WTC11 (cell line): ENCODE measurements at regions of chr11 and their contacts with region 1.

Region 1: GRCh38 chr11:116499396-116500003 is 273.3 kb downstream of the BUD13 start:
- DNase-seq: peak; percentile 98
- ATAC-seq: peak; percentile 84
- H3K4me3 Mint-ChIP-seq: 0 out of 2 replicates have a peak overlapping the region, but pooled peaks have one; percentile 18
- H3K27ac Mint-ChIP-seq: no peak overlapping the region
- H3K4me1 Mint-ChIP-seq: peaks cover 48% of the 10 kb centered on the region
- H3K27me3 Mint-ChIP-seq: peaks cover 27% of the 10 kb centered on the region
- CTCF ChIP-seq: peak; percentile 85

Region 2: DNA sequence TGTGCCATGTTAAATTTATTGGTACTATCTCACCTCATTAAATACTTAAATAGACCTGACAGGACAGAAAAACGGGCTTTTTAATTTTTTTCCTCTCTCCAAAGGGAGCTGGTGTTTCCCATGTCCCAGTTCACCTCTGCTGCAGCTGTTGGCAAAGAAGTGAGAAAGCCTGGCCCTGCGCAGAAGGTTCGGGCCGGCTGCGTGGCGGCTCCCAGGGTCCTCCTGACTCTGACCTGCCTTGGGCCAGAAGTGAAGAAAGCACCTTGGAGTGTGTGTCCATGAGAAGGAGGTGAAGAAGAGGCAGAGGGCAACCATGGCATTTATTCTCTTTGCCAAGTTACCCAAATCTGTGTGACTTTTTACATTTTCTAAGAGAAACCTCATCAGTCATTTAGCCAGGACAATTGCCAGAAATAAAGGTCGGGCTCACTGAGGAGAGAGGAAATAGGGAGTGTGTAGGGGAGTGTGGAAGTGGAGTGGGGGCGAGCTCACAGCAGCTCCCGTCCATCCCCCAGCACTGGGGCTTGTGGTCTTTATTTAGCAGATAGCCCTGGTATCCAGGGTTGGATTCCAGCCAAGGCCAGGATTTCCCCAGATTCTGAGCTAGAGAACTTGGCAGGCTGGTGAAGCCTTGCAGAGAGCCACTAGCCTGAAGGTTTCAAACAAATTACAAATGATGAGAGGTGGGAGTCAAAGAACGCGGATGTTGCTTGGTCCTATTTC is 892.8 kb before region 1 on chr11:
- CTCF ChIA-PET with region 1: no interaction called
- POLR2A ChIA-PET with region 1: no interaction called
- DNase-seq: no peak
- ATAC-seq: no peak
- H3K4me3 Mint-ChIP-seq: no peak overlapping the region
- H3K27ac Mint-ChIP-seq: no peak overlapping the region
- H3K4me1 Mint-ChIP-seq: peaks cover 8% of the 10 kb centered on the region
- H3K27me3 Mint-ChIP-seq: no peaks in the 10 kb centered on the region
- CTCF ChIP-seq: no peak

Region 3: DNA sequence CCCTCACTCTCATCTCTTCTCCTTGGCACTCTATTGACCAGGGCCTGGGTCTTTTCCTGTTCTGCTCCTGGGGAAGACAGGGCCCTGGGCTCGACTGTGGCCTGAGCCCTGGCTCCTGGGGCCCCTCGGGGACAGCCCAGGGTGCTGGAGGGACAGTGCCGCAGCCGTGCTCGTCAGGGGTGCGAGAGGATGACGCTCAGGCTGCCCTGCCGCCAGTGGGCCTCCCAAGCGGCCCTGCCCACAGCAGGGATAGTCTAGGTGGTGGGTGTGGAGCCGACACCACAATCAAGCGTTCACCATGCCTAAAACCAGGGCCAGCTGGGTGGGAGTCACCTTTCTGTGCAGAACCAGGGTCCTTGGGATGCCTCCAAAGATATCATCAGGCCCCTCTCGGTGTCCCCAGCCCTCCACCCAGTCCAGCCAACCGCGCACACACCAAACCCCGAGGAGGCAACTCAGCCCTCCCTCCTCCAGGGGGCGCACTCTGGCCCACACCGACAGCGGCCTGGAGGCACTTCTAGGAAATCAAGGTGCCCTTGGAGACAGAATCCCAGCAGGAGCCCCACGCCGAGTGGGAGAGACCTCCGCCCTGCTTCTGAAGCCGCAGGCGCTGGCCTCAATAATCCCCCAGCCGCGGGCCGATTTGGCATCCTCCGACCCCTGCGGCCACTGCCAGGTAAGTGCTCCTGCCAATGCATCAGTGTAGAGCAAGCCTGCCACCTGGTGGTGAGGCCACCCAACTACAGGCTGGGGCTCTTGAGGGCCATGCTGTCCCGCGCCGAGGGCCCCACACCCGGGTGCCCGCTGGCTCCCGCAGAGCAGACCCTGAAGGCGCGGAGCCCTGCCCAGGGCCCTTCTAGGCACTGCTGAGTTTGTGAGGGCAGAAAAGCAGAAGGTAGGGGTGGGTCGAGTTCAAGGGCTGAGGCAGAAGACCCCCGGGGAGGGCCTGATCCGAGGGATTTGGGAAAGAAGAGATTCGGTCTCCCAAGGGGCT is 223.2 kb before region 1 on chr11:
- CTCF ChIA-PET with region 1: interaction called, 60 read pairs
- POLR2A ChIA-PET with region 1: no interaction called
- DNase-seq: peak; percentile 97
- ATAC-seq: peak; percentile 88
- H3K4me3 Mint-ChIP-seq: peak overlapping the region; percentile 72
- H3K27ac Mint-ChIP-seq: no peak overlapping the region
- H3K4me1 Mint-ChIP-seq: 0 out of 2 replicates have a peak, but pooled peaks cover 2% of the 10 kb centered on the region
- H3K27me3 Mint-ChIP-seq: no peaks in the 10 kb centered on the region
- CTCF ChIP-seq: peak; percentile 99

Region 4: DNA sequence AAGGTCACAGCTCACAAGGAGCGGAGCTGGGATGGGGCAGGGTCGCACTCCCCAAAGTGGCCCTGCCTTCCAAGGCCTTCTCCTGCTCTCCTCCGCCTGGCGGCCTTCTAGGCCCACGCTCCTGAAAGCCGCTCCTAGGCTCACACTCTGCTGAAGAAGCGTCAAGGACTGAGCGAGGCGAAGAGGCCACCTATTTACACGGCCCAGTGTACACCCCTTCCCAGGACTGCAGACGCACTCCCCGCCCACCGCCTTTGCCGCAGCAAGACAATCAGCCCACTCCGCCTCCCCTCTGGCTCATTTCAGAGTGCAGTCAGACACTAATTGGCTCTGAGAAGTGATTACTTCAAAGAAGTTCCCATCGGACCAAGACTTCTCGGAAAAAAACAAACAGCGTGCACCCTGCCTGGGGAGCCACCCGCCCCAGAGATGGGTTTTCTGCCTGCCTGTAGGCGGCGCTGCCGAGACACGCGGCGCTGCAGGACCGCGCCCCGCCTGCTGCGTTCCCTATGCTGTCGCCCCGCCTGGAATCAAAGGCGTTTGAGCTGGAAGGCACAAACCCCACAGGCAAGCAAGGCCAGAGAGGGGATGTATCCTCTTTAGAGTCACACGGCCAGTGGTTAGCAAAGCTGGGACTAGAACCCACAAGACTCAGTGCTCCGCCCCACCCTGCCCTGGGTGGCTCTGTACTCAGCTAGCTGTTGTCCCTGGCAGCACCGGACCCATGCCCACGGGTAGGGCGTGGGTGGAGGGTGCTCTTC is 141.5 kb before region 1 on chr11:
- CTCF ChIA-PET with region 1: interaction called, 59 read pairs
- POLR2A ChIA-PET with region 1: no interaction called
- DNase-seq: peak; percentile 83
- ATAC-seq: peak; percentile 89
- H3K4me3 Mint-ChIP-seq: no peak overlapping the region
- H3K27ac Mint-ChIP-seq: 0 out of 2 replicates have a peak overlapping the region, but pooled peaks have one; percentile 34
- H3K4me1 Mint-ChIP-seq: peaks cover 51% of the 10 kb centered on the region
- H3K27me3 Mint-ChIP-seq: peaks cover 5% of the 10 kb centered on the region; the same call in 1 of the 2 replicates
- CTCF ChIP-seq: peak; percentile 92

Region 5: GRCh38 chr11:116427903-116428637 is 71.4 kb before region 1 on chr11:
- CTCF ChIA-PET with region 1: interaction called, 30 read pairs
- POLR2A ChIA-PET with region 1: no interaction called
- DNase-seq: no peak
- ATAC-seq: no peak
- H3K4me3 Mint-ChIP-seq: no peak overlapping the region
- H3K27ac Mint-ChIP-seq: peak overlapping the region; percentile 58; the same call in 1 of the 2 replicates
- H3K4me1 Mint-ChIP-seq: peaks cover 27% of the 10 kb centered on the region
- H3K27me3 Mint-ChIP-seq: no peaks in the 10 kb centered on the region; the same call in 1 of the 2 replicates
- CTCF ChIP-seq: no peak

Region 6: GRCh38 chr11:116461789-116462188 is 37.7 kb before region 1 on chr11:
- CTCF ChIA-PET with region 1: interaction called, 74 read pairs
- POLR2A ChIA-PET with region 1: no interaction called
- DNase-seq: no peak
- ATAC-seq: peak; percentile 86
- H3K4me3 Mint-ChIP-seq: no peak overlapping the region
- H3K27ac Mint-ChIP-seq: no peak overlapping the region; the same call in 1 of the 2 replicates
- H3K4me1 Mint-ChIP-seq: peaks cover 53% of the 10 kb centered on the region
- H3K27me3 Mint-ChIP-seq: peaks cover 4% of the 10 kb centered on the region; the same call in 1 of the 2 replicates
- CTCF ChIP-seq: no peak

Region 7: DNA sequence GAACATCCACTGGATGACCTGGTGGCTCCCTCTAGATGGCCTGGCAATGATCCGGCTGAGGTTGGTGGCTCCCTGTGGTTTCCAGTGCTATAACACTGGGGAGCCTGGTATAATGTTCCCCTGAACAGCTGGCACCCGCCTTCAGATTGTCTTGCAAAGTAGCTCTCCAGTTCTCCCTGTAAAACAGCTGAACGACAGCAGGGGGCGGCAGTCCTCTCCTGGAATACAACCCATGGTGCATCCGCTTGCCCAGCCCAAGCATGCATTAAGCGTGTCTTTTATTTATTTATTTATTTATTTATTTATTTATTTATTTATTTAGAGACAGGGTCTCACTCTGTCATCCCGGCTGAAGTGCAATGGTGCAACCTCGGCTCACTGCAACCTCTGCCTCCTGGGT is 14.4 kb after region 1 on chr11:
- CTCF ChIA-PET with region 1: interaction called, 56 read pairs
- POLR2A ChIA-PET with region 1: interaction called, 4 read pairs
- DNase-seq: peak; percentile 87
- ATAC-seq: peak; percentile 79
- H3K4me3 Mint-ChIP-seq: no peak overlapping the region
- H3K27ac Mint-ChIP-seq: no peak overlapping the region
- H3K4me1 Mint-ChIP-seq: peaks cover 29% of the 10 kb centered on the region
- H3K27me3 Mint-ChIP-seq: peaks cover under 1% of the 10 kb centered on the region
- CTCF ChIP-seq: peak; percentile 58

Region 8: GRCh38 chr11:116641561-116642045 is 142.1 kb after region 1 on chr11:
- CTCF ChIA-PET with region 1: interaction called, 33 read pairs
- POLR2A ChIA-PET with region 1: no interaction called
- DNase-seq: peak; percentile 85
- ATAC-seq: peak; percentile 93
- H3K4me3 Mint-ChIP-seq: no peak overlapping the region
- H3K27ac Mint-ChIP-seq: no peak overlapping the region
- H3K4me1 Mint-ChIP-seq: peaks cover 6% of the 10 kb centered on the region
- H3K27me3 Mint-ChIP-seq: no peaks in the 10 kb centered on the region; the same call in 1 of the 2 replicates
- CTCF ChIP-seq: peak; percentile 80